ENCODE measurements at regions of chr18 and their contacts with region 1.

Region 1: GRCh38 chr18:62697636-62698035 is 17.7 kb upstream of the PHLPP1 start:
- DNase-seq: no peak
- ATAC-seq: no peak
- H3K4me3 ChIP-seq: no peak overlapping the region
- H3K27ac ChIP-seq: no peak overlapping the region
- H3K4me1 ChIP-seq: no peaks in the 10 kb centered on the region
- CTCF ChIP-seq: no peak
- EP300 ChIP-seq: no peak
- POLR2A ChIP-seq: no peak
- RAD21 ChIP-seq: no peak

Region 2: GRCh38 chr18:62714671-62715435 is 17.2 kb after region 1 on chr18:
- CTCF ChIA-PET with region 1: interaction called, 11 read pairs
- POLR2A ChIA-PET with region 1: interaction called, 3 read pairs
- DNase-seq: peak; percentile 89 to 99
- ATAC-seq: peak; percentile 90 to 98
- H3K4me3 ChIP-seq: peak overlapping the region; percentile 69
- H3K27ac ChIP-seq: peak overlapping the region; percentile 85 to 93
- H3K4me1 ChIP-seq: peaks cover 25% of the 10 kb centered on the region
- CTCF ChIP-seq: peak; percentile 75
- EP300 ChIP-seq: no peak
- POLR2A ChIP-seq: no peak
- RAD21 ChIP-seq: peak; percentile 80 to 81

Region 3: DNA sequence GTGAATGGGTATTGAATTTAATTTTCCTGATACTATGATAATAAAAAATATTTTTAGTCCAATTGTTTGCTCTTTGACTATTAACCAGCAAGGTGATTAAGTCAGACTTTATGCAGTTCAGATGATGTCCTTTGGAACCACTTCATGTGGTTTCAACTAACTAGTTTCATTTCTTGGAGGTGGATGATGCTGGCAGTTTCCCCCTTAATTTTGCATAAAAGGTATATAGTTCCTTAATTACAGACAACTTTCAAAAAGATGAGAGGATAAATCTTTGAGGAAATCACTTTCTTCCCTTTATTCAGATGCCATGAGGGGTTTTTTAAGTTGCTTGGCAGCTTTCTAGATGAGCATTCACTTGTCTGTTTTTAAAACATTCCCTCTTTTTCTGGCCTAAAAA is 240.9 kb after region 1 on chr18:
- CTCF ChIA-PET with region 1: no interaction called
- POLR2A ChIA-PET with region 1: no interaction called
- DNase-seq: no peak
- ATAC-seq: no peak
- H3K4me3 ChIP-seq: no peak overlapping the region
- H3K27ac ChIP-seq: 0 out of 6 replicates have a peak overlapping the region, but pooled peaks of 1 of the 2 experiments have one; percentile 31
- H3K4me1 ChIP-seq: peaks cover 41% of the 10 kb centered on the region
- CTCF ChIP-seq: no peak
- EP300 ChIP-seq: no peak
- POLR2A ChIP-seq: no peak
- RAD21 ChIP-seq: no peak

Measured in A549 (cell line).